ENCODE measurements at regions of chr20 and their contacts with region 1.

Region 1: GRCh38 chr20:47453142-47453782 is 48.4 kb upstream of the NCOA3 start:
- DNase-seq: peak; percentile 77
- H3K4me3 Mint-ChIP-seq: no peak overlapping the region
- H3K27ac Mint-ChIP-seq: peak overlapping the region; percentile 74
- H3K4me1 Mint-ChIP-seq: peaks cover 35% of the 10 kb centered on the region
- H3K27me3 Mint-ChIP-seq: no peaks in the 10 kb centered on the region

Region 2: DNA sequence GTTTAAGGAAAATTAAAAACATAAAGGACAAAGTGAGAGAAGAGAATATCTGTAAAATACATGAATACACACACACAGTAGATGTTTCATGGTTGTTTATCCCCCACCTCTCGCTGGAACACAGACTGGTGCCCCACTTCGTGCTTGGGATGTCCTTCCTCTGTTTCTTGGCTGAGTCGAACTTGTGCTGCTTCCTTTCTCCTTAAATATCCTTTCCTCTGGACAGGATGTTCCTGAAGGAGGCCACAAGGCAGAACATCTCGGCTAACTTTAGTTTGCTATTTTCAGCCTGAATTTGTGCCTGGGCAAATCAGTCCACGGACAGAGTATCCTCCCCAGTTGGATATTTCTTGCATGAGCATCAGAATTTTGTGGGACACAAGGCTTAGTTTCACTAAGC is 42.1 kb before region 1 on chr20:
- CTCF ChIA-PET with region 1: interaction called, 3 read pairs
- POLR2A ChIA-PET with region 1: no interaction called
- intact Hi-C with region 1: loop called (anchors 1 kb)
- DNase-seq: no peak
- H3K4me3 Mint-ChIP-seq: peak overlapping the region; percentile 13
- H3K27ac Mint-ChIP-seq: no peak overlapping the region
- H3K4me1 Mint-ChIP-seq: peaks cover 31% of the 10 kb centered on the region
- H3K27me3 Mint-ChIP-seq: no peaks in the 10 kb centered on the region

Region 3: DNA sequence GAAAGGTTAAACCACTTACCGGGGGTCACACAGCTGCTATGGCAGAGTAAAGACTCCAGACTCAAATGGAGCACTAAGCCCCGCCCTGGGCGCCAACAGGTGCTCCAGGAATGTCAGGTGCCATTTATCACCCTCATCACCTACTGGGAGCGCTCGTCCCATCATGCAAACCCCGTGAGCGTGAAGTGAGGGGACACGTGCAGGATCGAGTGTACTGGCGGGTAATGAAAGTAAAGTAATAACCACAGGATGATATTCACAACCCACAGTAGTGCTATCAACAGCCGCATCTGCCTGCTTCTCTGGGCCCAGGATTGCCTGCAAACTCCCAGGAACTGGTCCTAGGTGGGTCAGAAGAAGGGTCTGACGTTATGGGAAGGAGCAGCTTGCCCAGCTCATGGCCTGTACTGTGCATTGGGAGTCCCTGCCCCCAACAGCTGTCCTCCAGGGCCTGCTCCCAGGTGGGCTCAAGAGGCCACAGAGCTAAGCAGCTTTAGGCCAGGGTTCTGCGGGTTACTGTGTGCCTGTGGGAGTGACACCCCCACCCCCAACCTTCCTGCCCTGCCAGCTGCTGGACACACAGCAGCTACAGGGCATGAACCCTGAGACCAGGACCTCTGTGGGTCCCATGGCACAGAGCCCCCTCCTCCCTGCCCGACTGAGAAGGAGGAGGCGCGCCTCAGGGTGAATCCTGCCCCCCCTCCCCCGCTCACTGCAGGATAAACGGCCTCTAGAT is 452.5 kb after region 1 on chr20:
- CTCF ChIA-PET with region 1: no interaction called
- POLR2A ChIA-PET with region 1: no interaction called
- intact Hi-C with region 1: no loop called
- DNase-seq: no peak
- H3K4me3 Mint-ChIP-seq: no peak overlapping the region
- H3K27ac Mint-ChIP-seq: no peak overlapping the region
- H3K4me1 Mint-ChIP-seq: no peaks in the 10 kb centered on the region
- H3K27me3 Mint-ChIP-seq: peaks cover 5% of the 10 kb centered on the region